Activated CD4-positive, alpha-beta memory T cell treated with anti-CD3 and anti-CD28 coated beads for 36 hours (primary cell): ENCODE measurements at regions of chr3 and their contacts with region 1.

Region 1: DNA sequence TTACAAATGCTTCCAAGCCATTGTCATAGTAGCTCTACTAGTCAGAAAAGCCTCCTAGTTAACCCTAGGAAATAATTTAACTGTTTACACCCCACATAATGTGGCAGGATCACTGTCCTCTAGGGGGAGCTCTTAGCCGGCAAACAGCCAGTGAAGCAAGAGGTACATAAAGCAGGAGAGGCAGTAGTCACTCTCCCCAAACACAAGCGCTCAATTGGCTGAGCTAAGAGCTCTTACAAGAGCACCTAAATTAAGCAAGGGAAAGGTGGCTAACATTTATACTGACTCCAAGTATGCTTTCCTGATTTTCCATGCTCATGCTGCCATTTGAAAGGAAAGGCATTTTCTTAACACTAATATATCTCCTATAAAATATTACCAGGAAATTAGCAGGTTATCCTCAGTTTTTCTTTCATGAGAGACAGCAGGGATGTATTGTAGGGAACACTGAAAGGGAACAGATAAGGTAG is 37.6 kb downstream of the NCEH1 start:
- DNase-seq: peak; percentile 83
- H3K4me3 Mint-ChIP-seq: no peak overlapping the region
- H3K27ac Mint-ChIP-seq: no peak overlapping the region
- H3K4me1 Mint-ChIP-seq: peaks cover 2% of the 10 kb centered on the region
- H3K27me3 Mint-ChIP-seq: no peaks in the 10 kb centered on the region

Region 2: GRCh38 chr3:172376881-172377280 is 296.4 kb before region 1 on chr3:
- CTCF ChIA-PET with region 1: no interaction called
- POLR2A ChIA-PET with region 1: no interaction called
- intact Hi-C with region 1: no loop called
- DNase-seq: no peak
- H3K4me3 Mint-ChIP-seq: no peak overlapping the region
- H3K27ac Mint-ChIP-seq: no peak overlapping the region
- H3K4me1 Mint-ChIP-seq: no peaks in the 10 kb centered on the region
- H3K27me3 Mint-ChIP-seq: no peaks in the 10 kb centered on the region

Region 3: DNA sequence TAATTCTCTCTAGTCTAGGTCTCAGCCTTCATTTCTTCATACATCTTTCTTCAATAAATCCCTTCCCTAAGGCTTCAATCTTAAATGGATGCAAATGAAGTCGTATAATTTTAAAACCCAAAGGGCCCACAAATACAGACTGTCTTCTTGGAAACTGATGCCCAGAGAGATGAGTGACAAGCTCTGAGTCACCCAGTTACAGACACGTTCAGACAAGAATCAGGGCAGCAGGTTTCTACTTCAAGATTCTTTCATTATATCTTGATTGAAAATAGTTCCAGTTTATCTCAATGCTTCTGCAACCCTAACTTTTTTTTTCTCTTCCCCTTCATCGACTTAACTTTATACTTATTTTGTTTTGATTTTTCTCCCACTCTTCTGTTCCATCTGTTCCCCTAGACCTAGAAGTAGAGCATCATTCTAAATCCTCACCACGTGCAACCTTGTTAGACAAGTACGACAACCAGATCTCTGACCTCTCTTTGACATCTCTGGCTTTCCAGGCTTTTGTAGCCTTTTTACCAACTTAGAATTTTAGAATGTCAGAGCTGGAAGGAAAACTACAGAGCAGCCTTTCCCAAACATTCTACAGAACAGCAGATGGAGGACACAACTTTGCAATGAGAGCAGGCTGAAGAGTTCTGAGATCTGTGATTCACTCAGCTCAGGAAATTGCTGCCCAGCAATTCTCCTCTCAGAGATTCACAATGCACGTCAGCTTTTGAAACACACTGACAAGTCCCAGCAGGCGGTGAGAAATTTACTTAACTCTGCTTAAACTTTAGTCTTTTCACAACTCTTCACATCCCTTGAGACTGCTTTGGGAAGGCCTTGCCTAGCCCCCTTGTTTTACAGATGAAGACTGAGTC is 12.3 kb after region 1 on chr3:
- CTCF ChIA-PET with region 1: interaction called, 27 read pairs
- POLR2A ChIA-PET with region 1: no interaction called
- intact Hi-C with region 1: no loop called
- DNase-seq: peak; percentile 13
- H3K4me3 Mint-ChIP-seq: no peak overlapping the region
- H3K27ac Mint-ChIP-seq: peak overlapping the region; percentile 55
- H3K4me1 Mint-ChIP-seq: peaks cover 9% of the 10 kb centered on the region
- H3K27me3 Mint-ChIP-seq: no peaks in the 10 kb centered on the region

Region 4: DNA sequence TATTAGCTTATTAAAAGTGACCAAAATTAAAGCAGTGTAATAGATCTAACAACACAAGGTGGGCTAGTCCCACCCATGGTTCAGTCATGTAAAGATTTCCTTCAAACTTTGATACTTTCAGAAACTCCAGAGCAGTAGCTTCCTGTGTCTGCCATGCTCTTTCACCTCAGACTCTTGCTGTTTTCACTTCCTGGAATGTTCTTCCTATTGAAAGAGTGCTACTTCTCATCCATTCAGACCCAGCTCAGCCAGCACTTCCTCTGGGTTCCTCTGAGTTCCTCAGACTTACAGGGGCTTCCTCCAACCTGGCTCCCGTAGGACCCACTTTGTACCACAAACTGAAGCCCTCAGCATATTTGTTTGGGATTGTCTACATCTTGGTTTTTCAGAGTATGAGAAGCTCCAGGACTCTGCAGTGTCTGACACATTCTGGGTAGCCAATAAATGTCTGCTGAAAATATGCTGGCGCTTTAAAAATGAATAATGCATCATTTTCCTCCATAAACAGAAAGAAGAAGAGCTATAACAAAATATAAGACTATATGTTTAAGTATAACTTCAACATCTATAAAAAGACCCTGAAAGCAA is 19.6 kb after region 1 on chr3:
- CTCF ChIA-PET with region 1: interaction called, 27 read pairs
- POLR2A ChIA-PET with region 1: no interaction called
- intact Hi-C with region 1: no loop called
- DNase-seq: no peak
- H3K4me3 Mint-ChIP-seq: no peak overlapping the region
- H3K27ac Mint-ChIP-seq: no peak overlapping the region
- H3K4me1 Mint-ChIP-seq: peaks cover 8% of the 10 kb centered on the region
- H3K27me3 Mint-ChIP-seq: no peaks in the 10 kb centered on the region

Region 5: DNA sequence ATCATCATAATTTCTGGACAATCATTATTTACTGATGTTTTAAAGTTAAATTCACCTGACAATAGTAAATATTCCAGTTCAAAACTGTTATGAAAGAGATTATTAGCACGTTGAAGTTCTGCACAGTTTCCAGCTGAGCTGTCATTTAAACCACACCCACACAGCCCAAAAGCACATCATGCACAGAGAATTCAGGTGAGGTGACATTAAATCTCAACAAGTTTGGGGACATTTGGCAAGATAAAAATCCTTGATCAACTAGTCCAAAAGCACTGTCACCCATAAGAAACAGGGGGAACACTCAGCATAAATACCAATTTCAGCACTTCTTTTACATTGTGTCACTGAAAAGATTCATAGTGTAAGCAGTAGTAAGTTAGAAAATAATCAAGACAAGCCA is 30.8 kb after region 1 on chr3:
- CTCF ChIA-PET with region 1: interaction called, 34 read pairs
- POLR2A ChIA-PET with region 1: no interaction called
- intact Hi-C with region 1: no loop called
- DNase-seq: no peak
- H3K4me3 Mint-ChIP-seq: no peak overlapping the region
- H3K27ac Mint-ChIP-seq: no peak overlapping the region
- H3K4me1 Mint-ChIP-seq: peaks cover 3% of the 10 kb centered on the region
- H3K27me3 Mint-ChIP-seq: no peaks in the 10 kb centered on the region

Region 6: DNA sequence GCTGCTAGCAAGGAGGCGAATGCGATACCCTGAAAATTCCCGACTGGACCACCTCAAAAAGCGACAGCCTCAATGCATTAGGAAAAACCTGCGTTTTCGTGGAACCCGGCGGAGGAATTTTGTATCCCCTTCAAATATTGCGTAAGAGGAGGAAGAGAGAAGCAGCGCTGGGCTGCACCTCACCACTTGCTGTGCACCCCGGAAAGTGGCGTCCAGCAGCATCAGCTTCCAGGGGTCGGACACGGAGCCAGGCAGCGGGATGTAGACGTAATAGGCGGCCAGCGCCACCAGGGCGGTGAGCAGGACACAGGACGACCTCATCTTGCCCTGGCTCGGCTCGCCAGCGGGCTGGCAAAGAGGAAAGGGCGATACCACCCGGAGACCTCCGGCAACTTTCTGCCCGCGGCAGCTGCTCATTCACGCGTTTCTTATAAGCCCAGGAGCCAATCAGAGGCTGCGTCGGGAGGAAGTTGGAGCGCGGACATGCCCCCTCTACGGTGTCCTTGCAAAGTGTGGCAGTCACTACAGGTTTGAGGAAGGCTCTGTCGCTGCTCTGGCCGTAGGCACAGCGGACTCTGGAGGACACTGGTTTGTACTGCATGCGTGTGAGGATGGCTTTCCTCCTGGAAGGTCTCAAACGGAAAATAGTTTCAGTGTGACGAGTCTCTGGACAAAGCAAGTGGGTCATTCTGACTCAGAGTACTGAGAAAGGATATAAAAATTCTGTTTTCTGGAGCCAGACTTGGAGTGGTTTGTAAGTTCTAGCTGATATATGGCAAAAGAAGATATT is 37.6 kb after region 1 on chr3 and contains the start of gene NCEH1:
- CTCF ChIA-PET with region 1: interaction called, 34 read pairs
- POLR2A ChIA-PET with region 1: no interaction called
- intact Hi-C with region 1: loop called (anchors 1 kb)
- DNase-seq: peak; percentile 87
- H3K4me3 Mint-ChIP-seq: peak within 1 kb of the TSS; percentile 91
- H3K27ac Mint-ChIP-seq: peak within 1 kb of the TSS; percentile 16
- H3K4me1 Mint-ChIP-seq: peaks cover 19% of the 10 kb centered on the region
- H3K27me3 Mint-ChIP-seq: no peaks in the 10 kb centered on the region
- total RNA-seq, gene NCEH1: 4.6 to 5.2 TPM

Region 7: DNA sequence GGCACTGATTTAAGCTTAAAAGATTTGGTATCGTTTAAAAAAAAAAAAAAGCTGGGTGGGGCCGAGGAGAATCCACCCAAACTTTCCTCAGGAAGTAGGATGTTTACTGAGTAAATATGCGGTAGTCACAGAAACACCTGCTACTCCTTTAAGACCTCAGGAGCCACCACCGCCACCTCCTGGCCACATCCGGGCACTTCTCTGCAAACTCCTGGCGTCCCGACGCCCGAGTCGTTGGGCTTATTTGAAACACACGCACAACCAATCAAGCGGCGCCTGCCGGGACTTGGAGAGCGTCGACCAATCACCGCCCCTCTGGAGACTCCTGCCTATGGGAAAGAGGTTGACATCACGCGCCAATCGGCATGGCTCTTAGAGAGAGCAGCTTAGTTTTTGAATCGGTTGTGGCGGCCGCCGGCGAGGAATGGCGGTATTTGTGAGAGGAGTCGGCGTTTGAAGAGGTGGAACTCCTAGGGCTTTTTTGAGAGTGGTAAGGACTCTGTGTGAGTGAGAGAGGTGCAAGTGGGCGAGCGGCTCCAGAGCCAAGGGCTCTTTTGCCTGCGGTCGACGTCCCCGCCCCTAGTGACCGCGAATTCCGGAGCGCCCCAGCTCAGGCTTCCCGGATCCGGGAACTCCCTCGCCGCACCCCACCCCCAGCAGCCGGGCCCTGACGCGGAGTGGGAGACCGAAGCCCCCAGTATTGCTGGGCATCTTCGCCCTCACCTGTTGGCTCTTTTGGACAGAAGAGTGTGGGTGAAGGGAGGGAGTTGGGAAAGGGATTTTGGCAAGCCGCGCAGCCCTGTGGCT is 77.3 kb after region 1 on chr3 and contains the start of gene ECT2:
- CTCF ChIA-PET with region 1: interaction called, 8 read pairs
- POLR2A ChIA-PET with region 1: no interaction called
- intact Hi-C with region 1: loop called (anchors 1 kb)
- DNase-seq: peak; percentile 99
- H3K4me3 Mint-ChIP-seq: peak within 1 kb of the TSS; percentile 87
- H3K27ac Mint-ChIP-seq: peak within 1 kb of the TSS; percentile 87
- H3K4me1 Mint-ChIP-seq: peaks cover 22% of the 10 kb centered on the region
- H3K27me3 Mint-ChIP-seq: peaks cover 1% of the 10 kb centered on the region
- total RNA-seq, gene ECT2: 48.2 to 52.8 TPM